Mammary epithelial cell (primary cell): ENCODE measurements at regions of chr5 and their contacts with region 1.

Region 1: DNA sequence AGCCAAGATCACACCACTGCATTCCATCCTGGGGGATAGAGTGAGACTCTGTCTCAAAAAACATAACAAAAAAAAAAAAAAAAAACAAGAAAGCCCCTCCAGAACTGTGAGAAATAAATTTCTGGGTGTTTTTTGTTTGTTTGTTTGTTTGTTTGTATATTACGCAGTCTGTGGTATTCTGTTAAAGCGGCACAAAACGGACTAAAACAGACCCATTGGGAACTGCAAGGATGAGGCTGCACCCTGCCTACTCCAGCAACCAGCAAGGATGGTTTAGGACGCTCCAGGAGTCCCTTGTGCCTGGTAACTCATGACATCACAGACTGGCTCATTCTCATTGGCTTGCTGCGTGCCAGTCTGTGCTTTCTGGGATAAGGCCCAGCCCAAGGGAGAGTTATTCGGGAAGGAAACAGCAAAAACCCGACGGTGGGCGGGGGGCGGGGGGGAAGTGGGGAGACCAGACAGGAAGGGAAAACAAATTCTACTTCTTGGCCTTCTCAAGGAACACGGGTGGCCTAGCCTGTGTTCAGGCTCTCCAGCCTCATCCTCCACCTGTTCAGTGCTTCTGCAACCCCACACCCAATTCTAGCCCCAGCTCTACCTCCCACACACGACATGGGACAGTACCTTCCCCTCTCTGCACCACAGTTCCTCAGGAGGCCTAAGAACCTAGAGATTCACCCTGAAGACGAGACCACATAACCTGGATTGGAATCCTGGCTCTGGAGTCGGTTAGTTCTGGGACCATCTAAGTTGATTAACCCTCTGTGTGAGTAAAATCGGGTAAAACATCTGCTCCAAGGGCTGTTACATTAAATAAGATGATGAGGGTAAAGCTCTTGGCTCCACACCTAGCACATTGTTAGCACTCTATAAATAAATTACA is 2.8 kb downstream of the CD74 start:
- DNase-seq: peak; percentile 80
- H3K4me3 ChIP-seq: no peak overlapping the region
- H3K27ac ChIP-seq: no peak overlapping the region
- H3K4me1 ChIP-seq: no peaks in the 10 kb centered on the region
- H3K27me3 ChIP-seq: no peaks in the 10 kb centered on the region
- CTCF ChIP-seq: no peak

Region 2: DNA sequence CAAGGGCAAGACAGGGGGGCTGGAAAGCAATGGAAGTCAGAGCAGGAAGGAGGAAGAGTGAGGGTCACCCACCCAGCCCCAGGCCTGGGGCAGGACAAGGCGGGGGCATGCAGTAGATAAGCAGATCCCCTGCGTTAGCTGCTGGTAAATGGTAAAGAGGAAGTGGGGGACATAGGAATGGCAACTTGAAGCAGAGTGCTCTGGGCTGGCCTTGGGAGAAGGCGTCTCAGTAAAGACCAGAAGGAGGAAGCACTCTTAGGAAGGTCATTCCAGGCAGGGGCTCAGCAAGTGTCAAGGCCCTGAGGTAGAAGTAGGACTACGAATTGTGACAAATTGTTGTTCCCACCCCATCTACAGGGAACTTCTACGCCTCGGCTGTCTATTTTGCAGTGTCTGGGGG is 37.2 kb before region 1 on chr5:
- CTCF ChIA-PET with region 1: no interaction called
- dilution Hi-C with region 1: loop called (anchors 5 kb)
- in situ Hi-C with region 1: no loop called
- intact Hi-C with region 1: no loop called
- DNase-seq: no peak
- H3K4me3 ChIP-seq: no peak overlapping the region
- H3K27ac ChIP-seq: no peak overlapping the region
- H3K4me1 ChIP-seq: peaks cover 6% of the 10 kb centered on the region
- H3K27me3 ChIP-seq: no peaks in the 10 kb centered on the region
- CTCF ChIP-seq: no peak